Mammary epithelial cell (primary cell): ENCODE measurements at regions of chr9 and their contacts with region 1.

Region 1: GRCh38 chr9:18051638-18052037 is 422.3 kb upstream of the ADAMTSL1 start:
- DNase-seq: no peak
- H3K4me3 ChIP-seq: no peak overlapping the region
- H3K27ac ChIP-seq: no peak overlapping the region
- H3K4me1 ChIP-seq: no peaks in the 10 kb centered on the region
- H3K27me3 ChIP-seq: no peaks in the 10 kb centered on the region
- CTCF ChIP-seq: no peak

Region 2: GRCh38 chr9:17994700-17995430 is 56.8 kb before region 1 on chr9:
- CTCF ChIA-PET with region 1: no interaction called
- dilution Hi-C with region 1: no loop called
- in situ Hi-C with region 1: no loop called
- intact Hi-C with region 1: no loop called
- DNase-seq: no peak
- H3K4me3 ChIP-seq: no peak overlapping the region
- H3K27ac ChIP-seq: no peak overlapping the region
- H3K4me1 ChIP-seq: no peaks in the 10 kb centered on the region
- H3K27me3 ChIP-seq: no peaks in the 10 kb centered on the region
- CTCF ChIP-seq: no peak

Region 3: GRCh38 chr9:18014556-18014955 is 37.1 kb before region 1 on chr9:
- CTCF ChIA-PET with region 1: no interaction called
- dilution Hi-C with region 1: no loop called
- in situ Hi-C with region 1: no loop called
- intact Hi-C with region 1: no loop called
- DNase-seq: no peak
- H3K4me3 ChIP-seq: no peak overlapping the region
- H3K27ac ChIP-seq: no peak overlapping the region
- H3K4me1 ChIP-seq: no peaks in the 10 kb centered on the region
- H3K27me3 ChIP-seq: peaks cover 2% of the 10 kb centered on the region
- CTCF ChIP-seq: no peak

Region 4: DNA sequence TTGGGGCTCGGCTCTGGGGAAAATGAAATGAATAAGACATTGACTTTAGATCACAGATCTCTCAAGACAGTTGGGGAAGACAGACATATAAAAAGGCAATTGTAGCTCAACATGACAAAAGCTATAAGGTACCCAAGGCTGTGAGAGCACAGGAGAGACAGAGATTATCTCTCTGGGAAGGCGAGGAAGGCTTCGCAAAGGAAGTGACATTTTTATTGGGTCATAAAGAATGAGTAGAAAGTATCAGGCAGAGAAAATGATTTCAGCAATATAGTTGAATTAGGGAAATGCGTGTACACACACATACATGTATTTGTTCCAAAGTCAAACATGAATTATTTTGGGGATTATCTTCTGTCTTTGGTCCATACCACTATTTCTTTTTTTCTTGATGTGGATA is 40.5 kb after region 1 on chr9:
- CTCF ChIA-PET with region 1: no interaction called
- dilution Hi-C with region 1: loop called (anchors 5 kb)
- in situ Hi-C with region 1: no loop called
- intact Hi-C with region 1: no loop called
- DNase-seq: no peak
- H3K4me3 ChIP-seq: no peak overlapping the region
- H3K27ac ChIP-seq: no peak overlapping the region
- H3K4me1 ChIP-seq: no peaks in the 10 kb centered on the region
- H3K27me3 ChIP-seq: no peaks in the 10 kb centered on the region
- CTCF ChIP-seq: no peak